Mammary epithelial cell (primary cell): ENCODE measurements at regions of chr18 and their contacts with region 1.

Region 1: DNA sequence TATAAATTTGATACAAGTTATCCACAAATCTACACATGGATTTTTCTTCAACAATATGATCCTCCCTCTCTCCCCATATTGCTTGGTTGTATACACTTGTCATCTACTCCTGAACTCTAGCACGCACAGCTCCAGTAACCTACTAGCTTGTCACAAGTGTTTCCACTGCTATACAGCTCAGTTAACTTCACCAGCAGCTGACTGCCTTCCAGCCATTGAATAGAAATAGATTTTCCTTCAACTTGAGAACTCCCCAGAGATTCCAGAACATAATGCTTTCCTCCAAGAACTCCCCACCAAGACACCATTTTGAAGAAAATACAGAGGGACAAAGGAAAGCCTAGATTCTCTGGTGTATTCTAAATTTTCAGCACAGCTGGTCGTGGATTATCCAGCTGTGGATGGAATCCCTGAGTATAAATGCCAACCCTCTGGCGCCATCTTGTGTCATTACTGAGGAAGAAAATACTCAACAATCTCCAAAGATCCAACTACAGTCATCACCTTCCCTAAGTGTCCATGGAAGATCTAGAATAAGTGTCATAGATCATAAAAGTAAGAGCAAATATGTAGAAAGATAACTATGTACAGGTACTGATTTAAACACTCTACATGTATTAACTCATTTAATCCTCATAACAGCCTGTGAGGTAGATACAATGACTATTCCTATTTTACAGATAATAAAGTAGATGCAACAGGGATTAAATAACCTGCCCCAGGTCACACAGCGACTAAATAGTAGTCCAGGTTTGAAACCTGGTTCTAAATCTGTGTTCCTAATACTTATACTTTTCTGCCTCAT is 156.7 kb downstream of the ARHGAP28 start:
- DNase-seq: peak; percentile 32
- H3K4me3 ChIP-seq: no peak overlapping the region
- H3K27ac ChIP-seq: no peak overlapping the region
- H3K4me1 ChIP-seq: no peaks in the 10 kb centered on the region
- H3K27me3 ChIP-seq: peaks cover 3% of the 10 kb centered on the region
- CTCF ChIP-seq: peak; percentile 60 to 71

Region 2: GRCh38 chr18:5879479-5879882 is 1006.7 kb before region 1 on chr18:
- CTCF ChIA-PET with region 1: no interaction called
- dilution Hi-C with region 1: no loop called
- in situ Hi-C with region 1: loop called (anchors 10 to 25 kb)
- intact Hi-C with region 1: loop called (anchors 1 kb)
- DNase-seq: peak; percentile 8
- H3K4me3 ChIP-seq: no peak overlapping the region
- H3K27ac ChIP-seq: no peak overlapping the region
- H3K4me1 ChIP-seq: no peaks in the 10 kb centered on the region
- H3K27me3 ChIP-seq: no peaks in the 10 kb centered on the region
- CTCF ChIP-seq: peak; percentile 73 to 81

Region 3: DNA sequence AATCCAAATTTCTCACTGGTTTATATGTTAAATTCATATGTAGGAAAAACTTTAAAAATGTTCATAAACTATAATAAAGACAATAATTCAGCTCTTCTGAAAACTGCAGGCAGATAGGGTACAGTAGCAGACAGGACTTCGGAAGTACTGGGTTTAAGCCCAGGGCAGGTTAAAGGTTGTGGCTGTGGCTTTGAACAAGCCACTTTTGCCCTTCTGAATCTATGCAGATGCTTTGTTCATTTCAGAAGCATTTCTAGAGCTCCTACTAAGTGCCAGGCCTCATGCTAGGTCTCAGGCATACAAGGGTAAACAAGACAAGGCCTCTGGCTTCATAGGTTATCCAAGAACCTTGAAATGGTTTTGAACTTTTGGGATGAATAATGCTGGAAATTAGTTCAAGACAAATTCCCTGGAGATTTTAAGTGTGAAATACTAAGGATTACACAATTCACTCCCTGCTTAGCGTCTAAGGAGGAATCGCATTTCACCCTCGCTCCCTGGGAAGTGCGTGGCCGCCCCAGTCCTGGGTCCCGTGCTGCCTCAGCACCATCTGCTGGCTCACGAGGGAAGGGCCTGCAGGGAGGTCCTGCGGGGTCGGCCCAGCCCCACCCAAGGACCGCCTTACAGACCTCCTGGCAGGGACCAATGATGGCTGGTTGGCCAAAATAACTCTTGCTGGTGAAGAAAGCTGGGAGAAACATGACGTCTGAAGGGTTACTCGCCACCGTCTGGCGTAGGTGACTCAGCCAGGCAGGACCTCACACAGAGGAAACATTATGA is 403.8 kb before region 1 on chr18:
- CTCF ChIA-PET with region 1: no interaction called
- dilution Hi-C with region 1: no loop called
- in situ Hi-C with region 1: no loop called
- intact Hi-C with region 1: loop called (anchors 2 kb)
- DNase-seq: peak; percentile 93
- H3K4me3 ChIP-seq: no peak overlapping the region
- H3K27ac ChIP-seq: peak overlapping the region; percentile 29
- H3K4me1 ChIP-seq: peaks cover 7% of the 10 kb centered on the region
- H3K27me3 ChIP-seq: no peaks in the 10 kb centered on the region
- CTCF ChIP-seq: peak in 1 of 2 donors; percentile 37

Region 4: DNA sequence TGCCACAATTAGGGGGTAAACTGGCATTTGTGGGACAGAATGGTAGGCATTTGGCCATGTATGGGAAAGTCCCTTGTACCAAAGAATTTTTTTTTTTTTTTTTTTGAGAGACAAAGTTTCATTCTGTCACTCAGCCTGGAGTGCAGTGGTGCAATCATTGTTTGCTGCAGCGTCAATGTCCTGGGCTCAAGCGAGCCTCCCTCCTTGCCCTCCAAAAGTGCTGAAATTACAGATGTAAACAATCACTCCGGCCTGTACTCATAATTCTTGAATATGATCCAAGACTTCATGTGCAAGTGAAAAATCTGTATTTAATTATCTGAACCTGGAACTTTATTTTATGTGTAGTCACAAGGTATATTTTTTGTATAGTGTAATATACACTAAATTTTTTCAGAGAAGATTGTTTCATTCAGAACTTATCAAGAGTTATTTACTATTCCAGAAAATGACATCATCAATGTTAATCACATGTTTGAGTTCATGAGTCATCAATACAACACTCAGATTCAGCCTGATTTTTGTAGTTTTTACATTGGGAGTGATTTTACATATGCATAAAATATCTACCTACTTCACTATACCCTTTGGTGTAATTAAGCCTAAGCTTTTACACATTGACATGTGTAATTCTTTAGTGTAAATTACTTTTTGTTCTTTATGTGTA is 332.8 kb before region 1 on chr18:
- CTCF ChIA-PET with region 1: no interaction called
- dilution Hi-C with region 1: no loop called
- in situ Hi-C with region 1: loop called (anchors 5 to 10 kb)
- intact Hi-C with region 1: no loop called
- DNase-seq: peak; percentile 8
- H3K4me3 ChIP-seq: no peak overlapping the region
- H3K27ac ChIP-seq: no peak overlapping the region
- H3K4me1 ChIP-seq: no peaks in the 10 kb centered on the region
- H3K27me3 ChIP-seq: no peaks in the 10 kb centered on the region
- CTCF ChIP-seq: no peak

Region 5: GRCh38 chr18:6746386-6746960 is 139.7 kb before region 1 on chr18:
- CTCF ChIA-PET with region 1: no interaction called
- dilution Hi-C with region 1: no loop called
- in situ Hi-C with region 1: no loop called
- intact Hi-C with region 1: no loop called
- DNase-seq: peak; percentile 33
- H3K4me3 ChIP-seq: no peak overlapping the region
- H3K27ac ChIP-seq: no peak overlapping the region
- H3K4me1 ChIP-seq: peaks cover 27% of the 10 kb centered on the region
- H3K27me3 ChIP-seq: no peaks in the 10 kb centered on the region
- CTCF ChIP-seq: no peak

Region 6: DNA sequence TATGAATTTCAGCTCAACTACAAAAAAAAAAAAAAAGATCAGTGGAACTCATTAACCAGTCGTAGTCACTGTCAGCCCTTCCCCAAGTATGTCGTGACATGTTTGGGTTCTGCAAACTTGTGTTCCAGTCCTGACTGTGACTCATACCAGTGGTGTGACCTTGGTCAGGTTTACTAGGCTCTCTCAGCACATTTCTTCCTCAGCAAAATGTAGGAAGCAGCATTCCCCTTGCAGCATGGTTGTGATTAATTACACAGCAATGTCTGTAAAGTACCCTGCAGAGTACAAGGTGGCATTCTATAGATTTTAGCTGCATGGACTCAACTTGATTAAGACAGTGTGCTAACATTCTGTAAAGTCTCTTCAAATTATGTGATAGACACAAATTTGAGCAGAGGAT is 74.5 kb after region 1 on chr18:
- CTCF ChIA-PET with region 1: no interaction called
- dilution Hi-C with region 1: no loop called
- in situ Hi-C with region 1: no loop called
- intact Hi-C with region 1: no loop called
- DNase-seq: peak; percentile 85
- H3K4me3 ChIP-seq: no peak overlapping the region
- H3K27ac ChIP-seq: peak overlapping the region; percentile 56
- H3K4me1 ChIP-seq: peaks cover 33% of the 10 kb centered on the region
- H3K27me3 ChIP-seq: no peaks in the 10 kb centered on the region
- CTCF ChIP-seq: no peak

Region 7: GRCh38 chr18:8176109-8176508 is 1289.9 kb after region 1 on chr18:
- CTCF ChIA-PET with region 1: no interaction called
- dilution Hi-C with region 1: no loop called
- in situ Hi-C with region 1: no loop called
- intact Hi-C with region 1: no loop called
- DNase-seq: no peak
- H3K4me3 ChIP-seq: no peak overlapping the region
- H3K27ac ChIP-seq: no peak overlapping the region
- H3K4me1 ChIP-seq: peaks cover 18% of the 10 kb centered on the region
- H3K27me3 ChIP-seq: no peaks in the 10 kb centered on the region
- CTCF ChIP-seq: no peak